ENCODE measurements at regions of chr11 and their contacts with region 1.

Region 1: GRCh38 chr11:118046051-118046963 is 30.6 kb upstream of the TMPRSS4 start:
- DNase-seq: no peak
- ATAC-seq: peak; percentile 53
- H3K4me3 Mint-ChIP-seq: no peak overlapping the region
- H3K27ac Mint-ChIP-seq: peak overlapping the region; percentile 56
- H3K4me1 Mint-ChIP-seq: peaks cover 40% of the 10 kb centered on the region
- H3K27me3 Mint-ChIP-seq: no peaks in the 10 kb centered on the region
- CTCF ChIP-seq: no peak

Region 2: DNA sequence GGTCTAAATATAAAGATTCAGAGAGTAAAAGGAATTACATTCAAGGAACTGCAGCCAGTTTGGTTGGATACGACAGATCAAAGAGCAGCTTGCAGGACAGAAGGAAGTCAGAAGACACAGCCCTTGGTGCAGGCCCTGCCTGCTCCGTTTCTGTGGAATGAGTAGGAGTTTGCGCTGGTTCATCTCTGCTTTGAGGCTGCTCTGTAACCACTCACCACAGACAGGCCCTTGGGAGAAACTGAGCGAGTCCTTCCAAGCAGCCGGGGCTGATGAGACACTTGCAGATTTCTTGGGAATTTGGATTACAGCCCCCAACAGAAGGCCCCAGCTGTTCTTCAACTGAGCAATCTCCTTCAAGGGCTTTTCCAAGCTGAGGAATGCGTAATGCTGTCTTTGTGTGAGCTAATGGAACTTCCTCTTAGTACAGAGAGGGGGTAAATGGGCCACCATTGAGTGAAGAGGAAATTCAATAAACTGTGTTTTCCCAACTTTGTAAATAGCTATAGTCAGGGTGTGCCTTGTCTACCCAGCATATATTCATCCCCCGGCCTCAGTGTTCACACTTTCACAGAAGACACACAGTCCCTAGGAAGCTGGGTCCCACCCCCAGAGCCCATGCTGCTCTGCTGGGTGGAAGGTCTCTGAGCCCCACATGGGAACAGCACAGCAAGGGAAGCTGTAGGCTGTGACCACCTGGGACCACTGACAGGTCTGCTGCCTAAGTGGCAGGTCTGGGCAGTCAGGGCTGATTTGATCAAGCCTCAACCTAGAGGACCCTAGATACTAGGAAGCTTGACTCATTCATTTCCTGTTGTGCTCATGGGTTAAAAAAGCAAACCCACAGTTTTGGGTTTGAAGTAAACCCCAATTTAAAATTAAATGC is 43.5 kb before region 1 on chr11:
- CTCF ChIA-PET with region 1: interaction called, 40 read pairs
- POLR2A ChIA-PET with region 1: interaction called, 136 read pairs
- intact Hi-C with region 1: no loop called
- DNase-seq: no peak
- ATAC-seq: peak; percentile 21
- H3K4me3 Mint-ChIP-seq: peak overlapping the region; percentile 52
- H3K27ac Mint-ChIP-seq: peak overlapping the region; percentile 98
- H3K4me1 Mint-ChIP-seq: peaks cover 93% of the 10 kb centered on the region
- H3K27me3 Mint-ChIP-seq: no peaks in the 10 kb centered on the region
- CTCF ChIP-seq: no peak

Region 3: DNA sequence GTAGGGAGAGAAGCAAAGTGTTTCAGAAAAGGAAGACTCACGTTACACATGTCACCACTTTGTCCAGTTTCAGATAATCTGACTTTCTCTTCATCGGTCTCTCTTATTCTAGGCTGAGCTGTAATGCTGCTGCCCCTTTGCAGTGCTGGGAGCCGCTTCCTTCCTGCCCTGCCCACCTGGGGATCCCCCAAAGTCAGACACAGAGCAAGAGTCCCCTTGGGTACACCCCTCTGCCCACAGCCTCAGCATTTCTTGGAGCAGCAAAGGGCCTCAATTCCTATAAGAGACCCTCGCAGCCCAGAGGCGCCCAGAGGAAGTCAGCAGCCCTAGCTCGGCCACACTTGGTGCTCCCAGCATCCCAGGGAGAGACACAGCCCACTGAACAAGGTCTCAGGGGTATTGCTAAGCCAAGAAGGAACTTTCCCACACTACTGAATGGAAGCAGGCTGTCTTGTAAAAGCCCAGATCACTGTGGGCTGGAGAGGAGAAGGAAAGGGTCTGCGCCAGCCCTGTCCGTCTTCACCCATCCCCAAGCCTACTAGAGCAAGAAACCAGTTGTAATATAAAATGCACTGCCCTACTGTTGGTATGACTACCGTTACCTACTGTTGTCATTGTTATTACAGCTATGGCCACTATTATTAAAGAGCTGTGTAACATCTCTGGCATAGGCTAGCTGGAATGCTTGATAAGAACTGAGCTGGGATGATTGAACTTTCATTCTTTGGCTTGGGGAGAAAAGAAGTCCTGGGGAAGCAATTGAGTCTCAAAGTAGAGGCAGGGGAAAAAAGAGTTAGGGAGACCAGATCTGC is 71.7 kb after region 1 on chr11:
- CTCF ChIA-PET with region 1: no interaction called
- POLR2A ChIA-PET with region 1: interaction called, 10 read pairs
- intact Hi-C with region 1: no loop called
- DNase-seq: no peak
- ATAC-seq: peak; percentile 34
- H3K4me3 Mint-ChIP-seq: no peak overlapping the region
- H3K27ac Mint-ChIP-seq: no peak overlapping the region
- H3K4me1 Mint-ChIP-seq: peaks cover 8% of the 10 kb centered on the region
- H3K27me3 Mint-ChIP-seq: peaks cover 14% of the 10 kb centered on the region
- CTCF ChIP-seq: no peak

Measured in activated B cell treated with CpG ODN at 0.5 μM for 24 hours (primary cell).